Spleen (tissue), 13 donors: ENCODE measurements at regions of chr14 and their contacts with region 1.

Region 1: GRCh38 chr14:99628832-99629618 is 15.9 kb upstream of the HHIPL1 start:
- DNase-seq: peak; percentile 89
- H3K4me3 ChIP-seq: no peak overlapping the region
- H3K27ac ChIP-seq: no peak overlapping the region
- H3K4me1 ChIP-seq: peaks cover 0 to 8% (median 6%) of the 10 kb centered on the region in 6 donors
- H3K27me3 ChIP-seq: peaks cover 0 to 22% (median 0%) of the 10 kb centered on the region in 7 donors
- CTCF ChIP-seq: peak; percentile 86 to 95 (median 92)
- POLR2A ChIP-seq: no peak

Region 2: GRCh38 chr14:99518441-99519346 is 110.3 kb before region 1 on chr14:
- intact Hi-C with region 1: loop called (anchors 2 kb)
- DNase-seq: peak; percentile 93
- H3K4me3 ChIP-seq: no peak overlapping the region
- H3K27ac ChIP-seq: no peak overlapping the region
- H3K4me1 ChIP-seq: peaks cover 0 to 28% (median 14%) of the 10 kb centered on the region in 6 donors
- H3K27me3 ChIP-seq: no peaks in the 10 kb centered on the region
- CTCF ChIP-seq: peak; percentile 84 to 99 (median 98)
- POLR2A ChIP-seq: no peak

Region 3: GRCh38 chr14:99537399-99537798 is 91.6 kb before region 1 on chr14:
- intact Hi-C with region 1: no loop called
- DNase-seq: no peak
- H3K4me3 ChIP-seq: no peak overlapping the region
- H3K27ac ChIP-seq: peak overlapping the region in 2 of 8 donors; percentile 5 to 76
- H3K4me1 ChIP-seq: peaks cover 6 to 56% (median 28%) of the 10 kb centered on the region in 6 donors
- H3K27me3 ChIP-seq: no peaks in the 10 kb centered on the region
- CTCF ChIP-seq: no peak
- POLR2A ChIP-seq: no peak